ENCODE measurements at regions of chr4 and their contacts with region 1.

Region 1: DNA sequence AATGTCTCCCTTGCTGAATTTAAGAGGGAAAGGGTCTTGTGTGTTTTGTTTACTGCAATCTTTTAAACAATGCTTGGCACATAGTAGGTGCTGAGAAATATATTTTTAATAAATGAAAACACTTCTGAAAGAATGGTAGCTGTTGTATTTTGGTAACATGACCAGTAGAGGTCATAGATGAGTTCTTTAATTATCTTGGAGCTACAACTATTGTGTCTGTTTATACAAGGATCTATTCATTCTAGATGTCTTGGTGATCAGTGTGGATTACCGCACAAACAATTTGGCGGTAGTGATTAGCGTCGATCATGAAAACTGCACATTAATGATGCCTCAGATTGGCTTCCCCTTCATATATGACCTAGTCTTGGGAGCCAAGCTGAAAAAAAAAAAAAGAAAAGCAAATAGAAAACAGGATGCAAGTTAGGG is 21.4 kb upstream of the SCRG1 start:
- H3K4me3 ChIP-seq: no peak overlapping the region
- H3K27ac ChIP-seq: no peak overlapping the region
- H3K4me1 ChIP-seq: no peaks in the 10 kb centered on the region
- CTCF ChIP-seq: no peak

Region 2: DNA sequence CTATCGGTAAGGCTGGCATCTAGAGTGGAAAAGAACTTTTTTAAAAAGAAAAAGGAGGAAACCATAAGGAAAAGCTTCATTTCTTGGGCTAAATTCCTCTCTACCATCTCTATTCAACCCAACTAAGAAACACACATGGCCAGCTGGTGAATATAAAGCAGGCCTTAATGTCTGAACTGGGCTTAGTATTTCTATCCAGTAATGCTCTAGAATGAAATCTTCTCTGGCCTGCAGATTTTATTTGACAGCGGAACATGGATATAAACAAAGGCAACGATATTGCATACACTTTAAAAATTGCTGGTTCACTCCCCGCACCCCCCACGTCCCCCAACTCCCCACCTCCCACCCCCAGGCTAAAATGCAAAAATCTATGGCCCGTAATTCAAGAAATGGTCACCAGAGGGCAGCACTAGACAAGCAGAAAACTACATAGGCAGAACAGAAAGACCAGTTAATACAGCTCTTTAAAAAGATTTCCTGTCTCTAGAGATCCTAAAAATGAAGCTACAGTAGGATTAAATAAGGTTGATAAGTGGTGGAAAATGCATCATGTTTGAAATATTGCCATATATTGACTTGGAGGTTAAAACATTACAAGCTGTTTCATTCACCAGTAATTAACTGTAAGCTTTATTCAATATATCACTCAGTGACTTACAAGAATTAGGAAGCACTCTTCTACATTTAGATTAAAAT is 407.0 kb before region 1 on chr4:
- CTCF ChIA-PET with region 1: interaction called, 24 read pairs
- POLR2A ChIA-PET with region 1: no interaction called
- H3K4me3 ChIP-seq: no peak overlapping the region
- H3K27ac ChIP-seq: no peak overlapping the region
- H3K4me1 ChIP-seq: no peaks in the 10 kb centered on the region
- CTCF ChIP-seq: no peak

Region 3: GRCh38 chr4:173432430-173432829 is 12.1 kb after region 1 on chr4:
- CTCF ChIA-PET with region 1: interaction called, 11 read pairs
- POLR2A ChIA-PET with region 1: no interaction called
- H3K4me3 ChIP-seq: no peak overlapping the region
- H3K27ac ChIP-seq: no peak overlapping the region
- H3K4me1 ChIP-seq: peaks cover 3% of the 10 kb centered on the region
- CTCF ChIP-seq: no peak

Region 4: DNA sequence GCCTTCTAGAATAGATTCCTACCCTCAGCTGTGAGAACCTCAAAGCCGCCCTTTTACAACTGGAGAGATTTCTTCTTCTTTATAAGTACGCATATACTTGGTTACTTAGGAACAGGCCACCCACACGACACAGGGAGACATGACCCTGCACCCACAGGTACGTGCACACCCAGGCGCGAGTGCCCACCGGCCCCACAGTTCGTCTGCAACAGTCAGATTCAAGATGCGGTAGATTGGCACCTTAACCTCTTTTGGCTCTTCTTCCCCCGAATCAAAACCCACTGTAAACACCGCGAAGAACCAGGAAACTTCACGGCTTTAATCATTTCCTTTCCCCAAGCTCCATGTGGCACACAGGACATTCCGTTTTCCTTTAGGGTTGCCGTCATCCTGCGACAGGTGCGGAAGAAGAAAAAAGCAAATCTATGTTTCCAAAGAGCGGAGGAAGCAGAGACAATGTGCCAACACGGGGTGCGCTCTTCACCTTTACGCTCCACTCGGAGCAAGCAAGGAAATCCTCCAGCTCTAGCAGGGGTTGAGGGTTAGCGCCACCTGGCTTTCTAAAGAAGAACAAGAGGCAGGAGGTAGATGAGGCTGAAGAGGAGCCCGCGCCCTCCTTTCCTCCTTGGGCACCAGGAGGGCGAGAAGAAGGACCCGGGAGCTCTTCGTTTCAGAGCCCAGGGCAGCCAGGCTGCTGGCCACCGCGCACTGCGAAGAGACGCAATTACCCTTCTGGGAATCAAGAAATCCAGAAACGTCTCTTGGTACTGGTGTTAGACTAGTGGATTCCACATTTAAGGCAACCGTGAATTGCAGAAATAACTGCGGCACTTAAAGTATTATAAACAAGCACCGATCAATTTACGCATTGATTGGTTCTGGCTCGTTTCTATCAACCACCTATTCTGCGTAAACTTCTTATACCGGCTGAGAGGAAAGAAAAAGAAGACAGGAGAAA is 74.0 kb after region 1 on chr4:
- CTCF ChIA-PET with region 1: interaction called, 38 read pairs
- POLR2A ChIA-PET with region 1: no interaction called
- H3K4me3 ChIP-seq: peak overlapping the region; percentile 36
- H3K27ac ChIP-seq: no peak overlapping the region
- H3K4me1 ChIP-seq: peaks cover 5% of the 10 kb centered on the region; the same call in 1 of the 2 replicates
- CTCF ChIP-seq: peak; percentile 76

Region 5: DNA sequence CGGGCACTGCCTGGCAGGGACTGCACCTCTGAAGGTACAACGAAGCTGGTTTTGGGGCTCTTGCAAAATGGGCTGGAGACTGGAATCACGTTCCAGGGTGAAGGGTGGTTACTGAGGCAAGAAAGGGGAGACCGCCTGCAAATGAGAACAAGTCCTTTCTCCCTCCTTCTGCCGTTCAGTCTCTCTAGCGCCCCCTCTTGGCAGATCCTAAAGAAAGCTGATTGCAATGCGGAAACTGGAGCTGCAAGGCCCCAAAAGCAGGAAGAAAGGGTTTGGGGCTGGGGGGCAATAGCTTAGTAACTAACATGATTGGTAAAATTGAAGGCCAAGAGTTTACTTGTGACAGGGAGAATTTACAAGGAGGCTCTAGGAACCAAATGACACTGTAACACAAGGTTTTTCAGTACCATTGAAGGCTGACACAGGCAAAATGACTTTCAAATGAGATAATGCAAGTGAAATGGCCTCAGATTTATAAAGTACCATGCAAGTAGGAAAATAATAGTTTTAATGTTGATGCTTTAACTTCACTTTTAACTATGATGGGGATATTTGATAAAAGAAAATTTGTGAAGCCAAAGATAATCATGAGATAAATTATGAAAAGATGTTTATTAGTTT is 332.4 kb after region 1 on chr4:
- CTCF ChIA-PET with region 1: interaction called, 11 read pairs
- POLR2A ChIA-PET with region 1: no interaction called
- H3K4me3 ChIP-seq: no peak overlapping the region
- H3K27ac ChIP-seq: no peak overlapping the region
- H3K4me1 ChIP-seq: no peaks in the 10 kb centered on the region
- CTCF ChIP-seq: peak; percentile 29; the same call in 1 of the 2 replicates